ENCODE measurements at regions of chr2 and their contacts with region 1.

Region 1: DNA sequence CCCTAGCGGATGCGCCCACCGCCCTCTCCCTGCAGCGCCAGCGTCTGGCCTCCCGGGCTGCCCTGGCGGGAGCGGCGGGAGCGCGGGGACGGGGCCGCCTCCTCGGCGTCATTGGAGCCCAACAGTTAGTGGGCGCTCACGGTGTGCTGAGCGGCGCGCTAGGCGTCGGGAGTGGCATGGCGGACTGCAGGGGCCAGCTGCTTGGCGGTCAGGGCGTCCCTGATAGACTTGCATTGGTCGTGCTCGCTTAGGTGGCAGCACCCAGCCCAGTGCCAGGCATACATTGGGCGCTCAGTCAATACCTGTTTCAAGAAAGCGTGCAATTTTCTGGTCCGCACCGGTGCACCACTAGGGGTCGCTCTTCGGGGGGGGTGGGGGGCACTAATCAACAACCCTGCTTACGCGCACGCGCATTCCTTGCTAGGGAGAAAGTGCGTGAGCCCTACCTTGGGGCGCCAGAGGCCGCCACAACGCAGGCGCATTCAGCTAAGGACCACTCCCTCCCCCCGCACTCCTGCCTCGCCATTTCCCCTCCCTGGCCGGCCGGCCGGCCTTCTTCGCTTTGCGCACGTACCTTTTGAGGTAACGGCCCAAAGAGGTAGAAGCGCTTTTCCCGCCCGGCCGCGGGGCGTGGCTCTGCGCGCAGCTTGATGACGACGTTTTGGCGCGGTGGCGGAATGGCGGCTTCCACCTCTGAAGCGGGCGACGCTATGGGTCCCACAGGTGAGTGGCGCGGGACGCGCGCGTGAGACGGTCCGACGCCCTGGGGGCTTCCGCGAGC is 411 bp upstream of the MZT2A start:
- DNase-seq: peak; percentile 89 to 99 (median 93)
- ATAC-seq: peak; percentile 84
- H3K4me3 ChIP-seq: peak overlapping the region; percentile 67
- H3K4me3 Mint-ChIP-seq: peak overlapping the region; percentile 89 to 98 (median 94)
- H3K27ac ChIP-seq: peak overlapping the region; percentile 96
- H3K27ac Mint-ChIP-seq: peak overlapping the region; percentile 89 to 99 (median 99)
- H3K4me1 ChIP-seq: peaks cover 13 to 14% of the 10 kb centered on the region in 2 donors
- H3K4me1 Mint-ChIP-seq: peaks cover 25 to 56% (median 42%) of the 10 kb centered on the region in 7 donors
- H3K27me3 ChIP-seq: no peaks in the 10 kb centered on the region
- H3K27me3 Mint-ChIP-seq: no peaks in the 10 kb centered on the region

Region 2: DNA sequence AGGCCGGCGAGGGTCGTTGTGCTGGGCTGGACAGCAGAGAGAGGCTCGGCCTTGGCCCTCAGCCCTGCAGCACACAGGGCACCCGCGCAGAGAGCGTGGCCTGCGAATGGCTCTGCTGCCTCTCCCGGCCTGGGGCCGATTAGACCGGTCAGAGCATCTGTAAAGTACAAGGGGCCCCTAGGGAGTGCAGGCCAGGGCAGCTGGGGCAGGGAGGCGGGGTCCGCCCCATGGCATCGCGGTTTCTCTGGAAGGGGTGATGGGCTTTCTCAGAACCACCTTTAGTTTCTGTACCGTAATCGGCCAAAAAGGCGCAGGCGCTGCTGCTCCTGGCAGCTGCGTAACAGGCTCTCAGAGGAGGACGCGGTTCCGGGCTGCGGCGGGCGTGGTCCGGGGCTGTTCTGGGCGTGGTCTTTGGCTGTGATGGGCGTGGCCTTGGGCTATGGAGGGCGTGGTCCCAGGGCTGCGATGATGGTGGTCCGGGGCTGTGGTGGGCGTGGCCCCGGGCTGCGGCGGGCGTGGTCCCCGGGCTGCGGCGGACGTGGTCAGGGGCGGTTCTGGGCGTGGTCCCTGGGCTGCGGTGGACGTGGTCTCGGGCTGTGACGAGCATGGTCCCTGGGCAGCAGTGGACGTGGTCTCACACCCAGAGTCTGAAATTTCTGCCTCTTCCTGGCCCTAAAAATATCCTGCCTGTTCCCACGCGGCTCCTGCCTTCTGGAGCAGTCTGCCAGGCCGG is 765.2 kb before region 1 on chr2:
- CTCF ChIA-PET with region 1: no interaction called
- POLR2A ChIA-PET with region 1: no interaction called
- intact Hi-C with region 1: loop called in 1 of 2 experiments (anchors 2 kb)
- DNase-seq: peak; percentile 74 to 91 (median 85)
- ATAC-seq: peak; percentile 98
- H3K4me3 ChIP-seq: peak overlapping the region; percentile 86
- H3K4me3 Mint-ChIP-seq: peak overlapping the region; percentile 74 to 89 (median 86)
- H3K27ac ChIP-seq: peak overlapping the region; percentile 83
- H3K27ac Mint-ChIP-seq: peak overlapping the region; percentile 76 to 95 (median 91)
- H3K4me1 ChIP-seq: peaks cover 15 to 18% of the 10 kb centered on the region in 2 donors
- H3K4me1 Mint-ChIP-seq: peaks cover 0 to 17% (median 16%) of the 10 kb centered on the region in 7 donors
- H3K27me3 ChIP-seq: no peaks in the 10 kb centered on the region
- H3K27me3 Mint-ChIP-seq: peaks cover 0 to 13% (median 0%) of the 10 kb centered on the region in 5 donors

Region 3: DNA sequence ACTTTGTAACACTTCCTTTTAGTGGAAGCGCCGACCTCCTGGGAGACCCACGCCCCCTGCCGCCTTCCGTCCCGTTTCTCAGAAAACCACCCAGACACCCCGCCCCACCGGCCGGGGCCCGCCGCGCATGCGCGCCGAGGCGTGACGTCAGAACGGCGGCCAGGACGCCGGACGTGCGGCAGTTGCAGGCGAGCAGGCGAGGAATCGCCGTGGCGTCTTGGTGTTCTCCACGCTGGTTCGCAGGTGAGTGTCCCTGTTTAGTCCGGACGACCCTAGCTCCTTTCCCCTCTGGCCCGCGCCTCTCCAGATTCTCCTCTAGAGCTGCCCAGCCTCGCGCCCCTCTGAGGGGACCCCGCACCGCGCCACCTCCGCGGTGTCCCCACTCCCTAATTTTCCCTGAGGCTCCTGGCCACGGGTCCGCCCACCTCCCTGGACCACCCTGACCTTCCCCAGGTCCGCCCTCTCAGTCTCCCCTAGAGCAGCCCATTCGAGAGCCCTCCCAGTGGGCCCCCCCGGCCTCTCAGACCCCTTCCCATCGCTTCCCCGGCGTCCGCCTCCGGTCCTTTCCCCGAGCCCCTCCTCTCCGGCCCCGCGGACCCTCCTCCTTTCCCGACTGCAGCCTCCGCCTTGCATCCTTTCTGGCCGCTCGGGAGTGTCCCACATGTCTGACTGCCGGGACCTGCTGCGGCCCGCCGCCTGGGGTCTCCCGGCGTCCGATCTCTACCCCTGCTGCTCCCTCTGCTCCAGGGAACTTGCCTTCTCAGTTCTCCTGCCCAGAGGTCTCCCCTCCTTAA is 387.3 kb before region 1 on chr2 and contains the start of gene PLEKHB2:
- CTCF ChIA-PET with region 1: no interaction called
- POLR2A ChIA-PET with region 1: interaction called, 3 read pairs
- intact Hi-C with region 1: loop called in 1 of 2 experiments (anchors 1 kb)
- DNase-seq: peak; percentile 88 to 99 (median 94)
- ATAC-seq: peak; percentile 81
- H3K4me3 ChIP-seq: peak within 1 kb of the TSS; percentile 95
- H3K4me3 Mint-ChIP-seq: peak within 1 kb of the TSS; percentile 93 to 98 (median 96)
- H3K27ac ChIP-seq: peak within 1 kb of the TSS; percentile 98
- H3K27ac Mint-ChIP-seq: peak within 1 kb of the TSS; percentile 93 to 99 (median 96)
- H3K4me1 ChIP-seq: peaks cover 15 to 22% of the 10 kb centered on the region in 2 donors
- H3K4me1 Mint-ChIP-seq: peaks cover 31 to 70% (median 52%) of the 10 kb centered on the region in 7 donors
- H3K27me3 ChIP-seq: no peaks in the 10 kb centered on the region
- H3K27me3 Mint-ChIP-seq: no peaks in the 10 kb centered on the region
- total RNA-seq, gene PLEKHB2: 43.1 to 92.3 (median 55.8) TPM

Region 4: DNA sequence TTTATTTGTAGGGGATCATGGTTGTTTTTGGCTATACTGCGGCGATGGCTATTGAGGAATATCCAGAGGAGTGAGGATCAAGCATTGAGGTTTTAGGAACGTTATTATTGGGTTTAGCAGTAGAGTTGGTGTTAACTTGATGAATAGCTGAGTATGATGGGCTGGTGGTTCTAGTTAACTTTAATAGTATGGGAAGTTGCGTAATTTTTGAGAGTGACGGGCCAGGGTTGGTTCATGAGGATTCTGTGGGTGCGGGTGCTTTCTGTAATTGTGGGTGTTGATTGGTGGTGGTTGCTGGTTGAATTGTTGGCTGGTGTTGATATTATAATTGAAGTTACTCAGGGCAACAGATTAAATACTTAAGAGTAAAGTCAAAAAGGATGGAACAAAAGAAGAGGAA is 122.7 kb before region 1 on chr2:
- CTCF ChIA-PET with region 1: no interaction called
- POLR2A ChIA-PET with region 1: no interaction called
- intact Hi-C with region 1: no loop called
- DNase-seq: no peak
- ATAC-seq: no peak
- H3K4me3 ChIP-seq: no peak overlapping the region
- H3K4me3 Mint-ChIP-seq: no peak overlapping the region
- H3K27ac ChIP-seq: no peak overlapping the region
- H3K27ac Mint-ChIP-seq: no peak overlapping the region
- H3K4me1 ChIP-seq: no peaks in the 10 kb centered on the region
- H3K4me1 Mint-ChIP-seq: no peaks in the 10 kb centered on the region
- H3K27me3 ChIP-seq: no peaks in the 10 kb centered on the region
- H3K27me3 Mint-ChIP-seq: peaks cover 6 to 20% (median 15%) of the 10 kb centered on the region in 5 donors

Region 5: DNA sequence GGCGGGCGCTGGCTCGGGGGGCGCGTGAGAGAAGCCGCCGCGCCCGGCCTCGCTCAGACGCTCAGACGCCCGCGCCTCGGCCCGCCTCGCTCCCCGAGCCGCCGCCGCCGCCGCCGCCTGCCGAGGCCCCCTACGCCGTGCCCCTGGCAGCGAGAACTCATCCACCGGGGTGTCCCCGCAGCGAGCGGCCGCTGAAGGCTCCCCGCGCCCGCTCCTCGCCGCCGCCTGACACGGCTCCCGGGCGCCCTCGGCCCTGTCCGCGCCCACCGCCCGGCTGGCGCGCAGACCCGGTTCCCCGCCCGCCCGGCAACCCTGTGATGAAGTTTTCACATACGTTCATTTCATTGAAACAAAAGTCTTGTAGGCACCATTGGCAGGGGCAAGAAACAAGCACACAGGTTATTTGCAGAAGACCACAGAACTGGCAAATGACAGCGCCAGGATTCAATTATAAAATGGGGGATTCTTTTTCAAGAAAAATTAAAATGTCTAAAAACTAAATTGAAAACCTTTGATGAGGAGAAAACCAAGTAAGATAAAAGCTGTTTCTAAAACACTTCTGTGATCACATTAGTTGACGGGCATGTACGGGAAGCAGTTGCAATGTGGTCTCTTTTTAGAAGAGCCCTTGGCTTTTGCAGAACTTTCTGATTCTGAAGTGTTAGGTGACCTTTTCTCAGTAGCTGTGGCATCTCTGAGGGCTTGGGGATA is 67.2 kb before region 1 on chr2:
- CTCF ChIA-PET with region 1: no interaction called
- POLR2A ChIA-PET with region 1: no interaction called
- intact Hi-C with region 1: no loop called
- DNase-seq: peak in 1 of 9 donors; percentile 35
- ATAC-seq: no peak
- H3K4me3 ChIP-seq: no peak overlapping the region
- H3K4me3 Mint-ChIP-seq: peak overlapping the region in 8 of 10 donors; percentile 3 to 59 (median 35)
- H3K27ac ChIP-seq: no peak overlapping the region
- H3K27ac Mint-ChIP-seq: no peak overlapping the region
- H3K4me1 ChIP-seq: no peaks in the 10 kb centered on the region
- H3K4me1 Mint-ChIP-seq: peaks cover 0 to 12% (median 9%) of the 10 kb centered on the region in 7 donors
- H3K27me3 ChIP-seq: peaks cover 3 to 5% of the 10 kb centered on the region in 2 donors
- H3K27me3 Mint-ChIP-seq: peaks cover 64 to 84% (median 68%) of the 10 kb centered on the region in 5 donors

Region 6: GRCh38 chr2:131509615-131510014 is 17.0 kb after region 1 on chr2:
- CTCF ChIA-PET with region 1: no interaction called
- POLR2A ChIA-PET with region 1: no interaction called
- intact Hi-C with region 1: loop called in 1 of 2 experiments (anchors 1 kb)
- DNase-seq: no peak
- ATAC-seq: no peak
- H3K4me3 ChIP-seq: no peak overlapping the region
- H3K4me3 Mint-ChIP-seq: no peak overlapping the region
- H3K27ac ChIP-seq: no peak overlapping the region
- H3K27ac Mint-ChIP-seq: no peak overlapping the region
- H3K4me1 ChIP-seq: no peaks in the 10 kb centered on the region
- H3K4me1 Mint-ChIP-seq: peaks cover 0 to 20% (median 2%) of the 10 kb centered on the region in 7 donors
- H3K27me3 ChIP-seq: no peaks in the 10 kb centered on the region
- H3K27me3 Mint-ChIP-seq: no peaks in the 10 kb centered on the region

Region 7: GRCh38 chr2:131567891-131568290 is 75.3 kb after region 1 on chr2:
- CTCF ChIA-PET with region 1: no interaction called
- POLR2A ChIA-PET with region 1: no interaction called
- intact Hi-C with region 1: no loop called
- DNase-seq: no peak
- ATAC-seq: no peak
- H3K4me3 ChIP-seq: no peak overlapping the region
- H3K4me3 Mint-ChIP-seq: no peak overlapping the region
- H3K27ac ChIP-seq: no peak overlapping the region
- H3K27ac Mint-ChIP-seq: no peak overlapping the region
- H3K4me1 ChIP-seq: no peaks in the 10 kb centered on the region
- H3K4me1 Mint-ChIP-seq: no peaks in the 10 kb centered on the region
- H3K27me3 ChIP-seq: peaks cover 0 to 6% of the 10 kb centered on the region in 2 donors
- H3K27me3 Mint-ChIP-seq: peaks cover 27 to 43% (median 36%) of the 10 kb centered on the region in 5 donors

Region 8: DNA sequence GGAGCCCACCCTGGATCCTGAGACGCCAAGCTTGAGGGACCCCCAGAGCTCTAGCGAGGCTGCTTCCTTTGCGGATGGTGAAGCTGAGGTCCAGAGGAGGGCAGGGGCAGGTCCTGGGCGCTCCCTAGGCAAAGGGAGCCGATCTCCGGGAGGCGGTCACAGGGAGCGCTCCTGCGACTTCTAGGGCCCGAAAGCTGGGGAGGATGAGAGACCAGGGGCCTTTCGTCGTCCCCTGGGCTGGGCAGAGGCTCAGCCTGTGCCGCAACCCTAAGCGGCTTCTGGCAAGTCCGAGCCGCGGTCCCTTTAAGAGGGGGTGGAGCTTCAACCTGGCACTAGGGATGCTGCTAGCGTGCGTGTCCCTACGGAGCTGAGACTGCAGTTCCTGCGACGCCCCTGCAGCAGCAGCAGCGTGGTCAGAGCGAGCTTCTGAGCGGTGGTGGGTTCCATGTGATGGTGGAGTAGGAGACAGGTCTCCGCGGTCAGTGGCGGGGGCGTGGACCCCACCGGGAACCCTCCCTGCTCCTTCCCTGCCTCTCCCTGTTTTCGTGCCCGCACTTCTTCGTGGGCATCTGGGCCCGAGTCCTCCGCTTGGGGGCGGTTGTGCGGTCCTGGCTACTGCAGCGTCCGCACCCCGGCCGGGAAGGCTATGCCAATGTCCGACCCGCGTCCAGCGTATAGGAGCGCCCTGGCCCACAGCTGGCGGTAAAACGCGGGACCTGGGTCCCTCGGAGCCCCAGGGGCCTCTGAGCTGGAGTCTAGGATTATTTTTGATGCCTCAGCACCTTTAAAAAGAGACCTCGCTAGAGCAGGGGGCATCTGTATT is 189.7 kb after region 1 on chr2:
- CTCF ChIA-PET with region 1: no interaction called
- POLR2A ChIA-PET with region 1: no interaction called
- intact Hi-C with region 1: loop called in 1 of 2 experiments (anchors 1 kb)
- DNase-seq: peak in 8 of 9 donors; percentile 47 to 73 (median 61)
- ATAC-seq: peak; percentile 95
- H3K4me3 ChIP-seq: peak overlapping the region; percentile 84
- H3K4me3 Mint-ChIP-seq: peak overlapping the region; percentile 79 to 93 (median 89)
- H3K27ac ChIP-seq: peak overlapping the region; percentile 52
- H3K27ac Mint-ChIP-seq: peak overlapping the region; percentile 67 to 92 (median 78)
- H3K4me1 ChIP-seq: no peaks in the 10 kb centered on the region
- H3K4me1 Mint-ChIP-seq: peaks cover 13 to 50% (median 29%) of the 10 kb centered on the region in 7 donors
- H3K27me3 ChIP-seq: no peaks in the 10 kb centered on the region
- H3K27me3 Mint-ChIP-seq: peaks cover 0 to 5% (median 0%) of the 10 kb centered on the region in 5 donors

Region 9: GRCh38 chr2:131816831-131817230 is 324.2 kb after region 1 on chr2:
- CTCF ChIA-PET with region 1: no interaction called
- POLR2A ChIA-PET with region 1: no interaction called
- intact Hi-C with region 1: no loop called
- DNase-seq: no peak
- ATAC-seq: no peak
- H3K4me3 ChIP-seq: no peak overlapping the region
- H3K4me3 Mint-ChIP-seq: no peak overlapping the region
- H3K27ac ChIP-seq: no peak overlapping the region
- H3K27ac Mint-ChIP-seq: no peak overlapping the region
- H3K4me1 ChIP-seq: no peaks in the 10 kb centered on the region
- H3K4me1 Mint-ChIP-seq: no peaks in the 10 kb centered on the region
- H3K27me3 ChIP-seq: no peaks in the 10 kb centered on the region
- H3K27me3 Mint-ChIP-seq: peaks cover 0 to 6% (median 0%) of the 10 kb centered on the region in 5 donors

Measured in naive thymus-derived CD4-positive, alpha-beta T cell (primary cell).